ENCODE measurements at regions of chr19 and their contacts with region 1.

Region 1: DNA sequence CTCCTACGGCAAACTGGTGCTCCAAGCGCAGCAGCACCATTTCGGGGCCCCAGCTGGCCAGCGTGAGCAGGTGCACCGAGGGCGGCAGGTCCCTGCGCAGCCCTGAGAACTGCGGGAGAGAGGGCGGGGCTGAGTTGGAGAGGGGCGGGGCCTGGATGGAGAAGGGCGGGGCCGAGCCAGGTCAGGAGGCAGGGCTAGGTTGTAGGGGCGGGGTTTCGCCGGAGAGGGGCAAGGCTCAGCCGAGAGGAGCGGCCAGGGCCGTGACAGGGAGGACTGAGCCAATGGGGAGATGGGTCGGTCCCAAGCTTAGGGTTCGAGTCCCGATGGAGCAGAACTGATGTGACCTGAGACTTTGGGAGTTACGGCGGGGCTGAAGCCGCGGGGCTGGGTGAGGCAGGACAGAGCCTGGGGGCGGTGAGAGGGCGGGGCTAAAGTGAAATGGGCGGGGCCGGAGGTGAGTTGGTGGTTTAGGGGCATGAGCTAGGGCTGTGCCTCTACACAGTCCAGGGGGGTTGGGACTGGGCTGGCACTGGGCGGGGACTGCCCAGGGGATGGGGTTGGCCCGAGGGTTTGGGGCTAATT is 19.0 kb downstream of the MAN2B1 start:
- H3K4me3 ChIP-seq: no peak overlapping the region
- H3K27ac ChIP-seq: no peak overlapping the region
- H3K4me1 ChIP-seq: no peaks in the 10 kb centered on the region
- CTCF ChIP-seq: no peak

Region 2: DNA sequence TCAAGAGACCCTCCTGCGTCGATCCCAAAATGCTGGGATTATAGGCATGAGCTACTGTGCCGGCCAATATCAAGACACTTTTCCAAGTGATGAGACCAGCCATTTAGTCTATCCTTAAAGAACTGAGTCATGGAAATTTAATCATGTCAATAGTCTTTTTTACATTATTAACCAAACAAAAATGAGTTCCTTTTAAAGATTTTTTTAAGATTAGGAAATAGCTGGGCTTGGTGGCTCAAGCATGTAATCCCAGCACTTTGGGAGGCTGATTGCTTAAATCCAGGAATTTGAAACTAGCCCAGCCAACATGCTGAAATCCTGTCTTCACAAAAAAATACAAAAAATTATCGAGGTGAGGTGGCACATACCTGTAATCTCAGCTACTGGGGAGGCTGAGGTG is 79.6 kb before region 1 on chr19:
- CTCF ChIA-PET with region 1: no interaction called
- POLR2A ChIA-PET with region 1: interaction called, 10 read pairs
- H3K4me3 ChIP-seq: no peak overlapping the region
- H3K27ac ChIP-seq: no peak overlapping the region
- H3K4me1 ChIP-seq: no peaks in the 10 kb centered on the region
- CTCF ChIP-seq: no peak

Region 3: GRCh38 chr19:12628040-12629022 is 19.2 kb before region 1 on chr19:
- CTCF ChIA-PET with region 1: no interaction called
- POLR2A ChIA-PET with region 1: no interaction called
- H3K4me3 ChIP-seq: no peak overlapping the region
- H3K27ac ChIP-seq: no peak overlapping the region
- H3K4me1 ChIP-seq: no peaks in the 10 kb centered on the region
- CTCF ChIP-seq: no peak

Measured in HEK293 (cell line).